Activated naive CD4-positive, alpha-beta T cell treated with anti-CD3 and anti-CD28 coated beads, Interleukin-2, amount 10 ng/mL, durations not matched to agents 7 days and 5 days (primary cell): ENCODE measurements at regions of chr12 and their contacts with region 1.

Region 1: DNA sequence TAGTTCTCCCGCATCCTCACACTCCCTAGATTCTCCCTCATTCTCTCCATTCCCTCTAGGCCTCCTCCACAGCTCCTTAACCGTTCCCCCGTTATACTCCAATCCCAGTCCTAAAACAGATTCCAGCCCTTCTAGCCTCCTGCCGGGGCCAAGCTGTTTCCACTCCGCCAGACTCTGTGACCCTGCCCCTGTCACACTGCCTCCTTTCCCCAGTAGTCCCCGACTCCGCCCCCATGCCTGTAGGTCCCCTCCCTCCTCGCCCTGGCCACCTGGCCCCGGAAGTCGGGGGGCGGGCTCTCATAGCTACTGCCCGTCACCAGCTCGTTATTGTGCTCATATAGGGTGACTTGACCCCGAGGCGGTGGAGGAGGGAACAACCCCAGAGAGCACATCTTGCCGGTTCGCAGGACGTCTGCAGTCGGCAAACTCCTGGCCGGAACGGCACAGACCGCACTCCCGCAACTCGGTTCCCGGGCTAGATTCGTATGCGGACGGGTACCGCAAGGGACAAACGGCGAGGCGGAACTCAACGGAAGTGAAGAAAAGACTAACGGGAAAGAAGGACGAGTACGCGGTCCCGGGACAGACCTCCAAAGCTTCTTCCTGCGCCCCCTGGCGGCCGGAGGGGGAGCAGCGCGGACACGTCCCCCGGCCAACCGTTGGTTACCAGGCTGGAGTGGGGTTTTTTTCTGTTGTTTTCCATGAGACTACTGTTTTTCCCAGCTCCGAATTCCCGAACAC is at the start of gene AAAS:
- DNase-seq: peak; percentile 98
- H3K4me3 Mint-ChIP-seq: peak within 1 kb of the TSS; percentile 89
- H3K27ac Mint-ChIP-seq: peak within 1 kb of the TSS; percentile 92
- H3K4me1 Mint-ChIP-seq: peaks cover 51% of the 10 kb centered on the region
- H3K27me3 Mint-ChIP-seq: peaks cover 6% of the 10 kb centered on the region

Region 2: GRCh38 chr12:52920937-52921826 is 400.1 kb before region 1 on chr12:
- CTCF ChIA-PET with region 1: no interaction called
- DNase-seq: no peak
- H3K4me3 Mint-ChIP-seq: no peak overlapping the region
- H3K27ac Mint-ChIP-seq: no peak overlapping the region
- H3K4me1 Mint-ChIP-seq: peaks cover 6% of the 10 kb centered on the region
- H3K27me3 Mint-ChIP-seq: peaks cover 34% of the 10 kb centered on the region

Region 3: DNA sequence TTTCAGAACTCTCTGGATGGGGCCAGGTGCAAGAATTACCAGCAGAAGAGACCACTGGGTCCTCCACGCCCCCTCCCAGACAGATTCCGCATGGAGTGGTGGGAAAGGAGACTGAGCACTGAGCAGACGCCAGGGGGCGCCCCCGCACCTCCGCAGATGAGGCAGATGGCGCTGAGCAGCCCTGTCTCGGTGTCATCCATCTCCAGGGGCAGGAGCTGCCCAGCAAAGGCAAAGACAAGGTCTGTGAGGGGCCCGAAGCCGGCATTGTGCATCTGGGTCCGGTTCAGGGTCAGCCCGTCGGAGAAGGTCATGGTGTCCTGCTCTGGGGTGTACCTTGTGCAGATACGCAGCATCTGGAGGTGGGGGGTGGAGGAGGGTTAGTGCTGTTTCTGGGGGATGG is 107.9 kb before region 1 on chr12:
- CTCF ChIA-PET with region 1: interaction called, 108 read pairs
- DNase-seq: peak; percentile 89
- H3K4me3 Mint-ChIP-seq: no peak overlapping the region
- H3K27ac Mint-ChIP-seq: peak overlapping the region; percentile 50
- H3K4me1 Mint-ChIP-seq: peaks cover 84% of the 10 kb centered on the region
- H3K27me3 Mint-ChIP-seq: no peaks in the 10 kb centered on the region

Region 4: DNA sequence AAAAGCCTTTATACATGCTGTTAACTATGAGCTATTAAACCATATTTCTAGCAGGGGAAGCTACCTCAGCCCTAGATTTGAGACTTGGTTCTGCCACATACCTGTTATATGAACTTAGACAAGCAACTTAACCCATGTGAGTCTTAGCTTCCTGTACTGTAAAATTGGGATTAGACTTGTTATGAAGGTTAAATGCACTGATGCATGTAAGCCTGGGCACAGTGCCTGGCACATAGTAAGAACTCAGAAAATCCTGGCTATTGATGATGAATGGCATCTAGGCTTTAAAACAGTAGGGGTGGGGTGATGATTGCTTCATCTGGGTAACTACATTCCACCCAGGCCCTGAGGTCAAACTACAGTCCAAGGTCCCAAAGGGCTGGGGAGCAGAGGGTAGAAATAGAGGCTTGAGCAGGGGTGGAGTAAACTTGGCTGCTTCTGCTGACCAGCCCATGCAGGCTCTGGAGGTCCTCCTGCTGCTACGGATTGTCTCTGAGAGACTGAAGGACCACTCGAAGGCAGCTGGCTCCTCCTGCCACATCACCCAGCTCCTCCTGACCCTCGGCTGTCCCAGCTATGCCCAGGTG is 41.9 kb before region 1 on chr12:
- CTCF ChIA-PET with region 1: no interaction called
- DNase-seq: no peak
- H3K4me3 Mint-ChIP-seq: no peak overlapping the region
- H3K27ac Mint-ChIP-seq: no peak overlapping the region
- H3K4me1 Mint-ChIP-seq: peaks cover 4% of the 10 kb centered on the region
- H3K27me3 Mint-ChIP-seq: no peaks in the 10 kb centered on the region

Region 5: GRCh38 chr12:53295070-53295890 is 26.0 kb before region 1 on chr12 and contains the start of gene PFDN5:
- CTCF ChIA-PET with region 1: interaction called, 21 read pairs
- DNase-seq: peak; percentile 92
- H3K4me3 Mint-ChIP-seq: peak within 1 kb of the TSS; percentile 100
- H3K27ac Mint-ChIP-seq: peak within 1 kb of the TSS; percentile 92
- H3K4me1 Mint-ChIP-seq: peaks cover 54% of the 10 kb centered on the region
- H3K27me3 Mint-ChIP-seq: no peaks in the 10 kb centered on the region

Region 6: DNA sequence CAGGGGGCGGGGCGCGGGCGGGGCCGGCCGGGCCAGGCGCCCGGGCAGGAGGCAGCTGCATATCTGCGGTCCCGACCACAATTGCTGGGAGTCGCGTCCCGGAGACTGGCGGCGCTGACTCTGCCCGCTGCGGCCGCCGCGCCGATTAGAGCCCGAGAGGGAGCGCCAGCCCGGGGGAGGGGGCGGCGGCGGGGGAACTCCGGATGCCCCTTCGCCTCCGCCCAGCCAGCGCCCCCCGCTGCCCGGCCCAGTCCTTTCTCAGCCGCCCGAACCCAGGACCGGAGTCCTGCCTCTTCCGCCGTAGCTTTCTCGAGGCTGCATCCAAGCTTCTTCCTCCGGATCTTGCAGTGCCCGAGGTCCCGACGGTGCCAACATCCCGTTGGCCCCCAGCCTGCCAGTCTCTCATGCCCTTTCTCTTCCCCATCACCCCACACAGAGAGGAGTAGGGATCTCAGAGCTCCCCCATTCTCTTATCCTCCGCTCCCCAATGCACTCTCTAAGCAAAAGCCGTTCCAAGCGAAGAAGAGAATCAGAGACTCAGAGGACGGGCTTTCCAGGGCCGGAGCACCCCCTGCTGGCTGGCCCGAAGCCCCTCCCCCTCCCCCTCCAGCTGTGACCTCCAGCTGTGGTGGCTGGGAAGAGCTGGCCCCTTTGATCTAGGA is 23.7 kb after region 1 on chr12:
- CTCF ChIA-PET with region 1: interaction called, 178 read pairs
- DNase-seq: peak; percentile 81
- H3K4me3 Mint-ChIP-seq: peak overlapping the region; percentile 95
- H3K27ac Mint-ChIP-seq: peak overlapping the region; percentile 75
- H3K4me1 Mint-ChIP-seq: peaks cover 16% of the 10 kb centered on the region
- H3K27me3 Mint-ChIP-seq: peaks cover 42% of the 10 kb centered on the region

Region 7: DNA sequence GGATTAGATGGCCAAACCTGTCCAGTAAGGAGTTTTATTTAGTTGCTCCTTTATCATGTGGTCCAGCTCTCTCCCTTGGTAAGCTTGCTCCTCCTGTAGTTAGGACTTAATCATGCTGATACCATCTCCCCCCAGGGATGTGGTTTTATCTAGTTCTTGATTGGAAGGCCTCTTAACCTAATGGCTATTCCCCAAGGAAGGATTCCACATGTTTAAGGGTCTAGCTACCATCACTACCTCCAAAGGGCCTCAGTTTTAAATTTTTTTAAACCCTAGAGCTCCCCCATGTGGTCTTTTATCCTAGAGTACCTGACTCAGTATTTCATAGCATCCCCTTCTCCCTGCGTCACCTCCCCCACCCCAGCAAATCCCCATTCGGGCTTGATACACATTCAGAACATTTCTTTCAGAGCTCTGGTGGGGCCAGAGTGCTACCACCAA is 155.5 kb after region 1 on chr12:
- CTCF ChIA-PET with region 1: interaction called, 12 read pairs
- DNase-seq: no peak
- H3K4me3 Mint-ChIP-seq: no peak overlapping the region
- H3K27ac Mint-ChIP-seq: peak overlapping the region; percentile 55
- H3K4me1 Mint-ChIP-seq: peaks cover 28% of the 10 kb centered on the region
- H3K27me3 Mint-ChIP-seq: no peaks in the 10 kb centered on the region